IMR-90 (cell line): ENCODE measurements at regions of chr19 and their contacts with region 1.

Region 1: GRCh38 chr19:47608074-47608918 is 638 bp upstream of the BICRA start:
- DNase-seq: peak; percentile 90
- ATAC-seq: peak; percentile 94
- H3K4me3 ChIP-seq: peak overlapping the region; percentile 95
- H3K27ac ChIP-seq: peak overlapping the region; percentile 98
- H3K4me1 ChIP-seq: peaks cover 15% of the 10 kb centered on the region
- H3K27me3 ChIP-seq: no peaks in the 10 kb centered on the region
- CTCF ChIP-seq: peak; percentile 30; the same call in 1 of the 2 replicates
- POLR2A ChIP-seq: peak; percentile 80
- RAD21 ChIP-seq: peak; percentile 26

Region 2: GRCh38 chr19:47540728-47541127 is 67.6 kb before region 1 on chr19:
- CTCF ChIA-PET with region 1: no interaction called
- POLR2A ChIA-PET with region 1: no interaction called
- dilution Hi-C with region 1: no loop called
- in situ Hi-C with region 1: no loop called
- intact Hi-C with region 1: loop called (anchors 2 kb)
- DNase-seq: peak; percentile 51
- ATAC-seq: peak; percentile 84
- H3K4me3 ChIP-seq: no peak overlapping the region
- H3K27ac ChIP-seq: no peak overlapping the region
- H3K4me1 ChIP-seq: peaks cover 3% of the 10 kb centered on the region
- H3K27me3 ChIP-seq: peaks cover 31% of the 10 kb centered on the region
- CTCF ChIP-seq: peak; percentile 44
- POLR2A ChIP-seq: no peak
- RAD21 ChIP-seq: peak; percentile 39

Region 3: GRCh38 chr19:47652285-47652684 is 44.0 kb after region 1 on chr19:
- CTCF ChIA-PET with region 1: no interaction called
- POLR2A ChIA-PET with region 1: no interaction called
- dilution Hi-C with region 1: no loop called
- in situ Hi-C with region 1: no loop called
- intact Hi-C with region 1: no loop called
- DNase-seq: no peak
- ATAC-seq: no peak
- H3K4me3 ChIP-seq: no peak overlapping the region
- H3K27ac ChIP-seq: no peak overlapping the region
- H3K4me1 ChIP-seq: no peaks in the 10 kb centered on the region; the same call in 1 of the 2 replicates
- H3K27me3 ChIP-seq: no peaks in the 10 kb centered on the region
- CTCF ChIP-seq: no peak
- POLR2A ChIP-seq: no peak
- RAD21 ChIP-seq: no peak

Region 4: GRCh38 chr19:47663841-47664771 is 55.8 kb after region 1 on chr19:
- CTCF ChIA-PET with region 1: no interaction called
- POLR2A ChIA-PET with region 1: no interaction called
- dilution Hi-C with region 1: no loop called
- in situ Hi-C with region 1: no loop called
- intact Hi-C with region 1: loop called (anchors 2 kb)
- DNase-seq: peak; percentile 99
- ATAC-seq: peak; percentile 80
- H3K4me3 ChIP-seq: no peak overlapping the region; the same call in 1 of the 2 replicates
- H3K27ac ChIP-seq: peak overlapping the region; percentile 83
- H3K4me1 ChIP-seq: peaks cover 35% of the 10 kb centered on the region
- H3K27me3 ChIP-seq: no peaks in the 10 kb centered on the region
- CTCF ChIP-seq: no peak
- POLR2A ChIP-seq: no peak
- RAD21 ChIP-seq: peak; percentile 17; the same call in 1 of the 2 replicates

Region 5: GRCh38 chr19:47707135-47707925 is 99.0 kb after region 1 on chr19:
- CTCF ChIA-PET with region 1: no interaction called
- POLR2A ChIA-PET with region 1: no interaction called
- dilution Hi-C with region 1: no loop called
- in situ Hi-C with region 1: no loop called
- intact Hi-C with region 1: no loop called
- DNase-seq: peak; percentile 75
- ATAC-seq: peak; percentile 89
- H3K4me3 ChIP-seq: no peak overlapping the region
- H3K27ac ChIP-seq: no peak overlapping the region
- H3K4me1 ChIP-seq: peaks cover 5% of the 10 kb centered on the region
- H3K27me3 ChIP-seq: no peaks in the 10 kb centered on the region
- CTCF ChIP-seq: peak; percentile 88
- POLR2A ChIP-seq: 0 out of 2 replicates have a peak, but pooled peaks have one; percentile 27
- RAD21 ChIP-seq: peak; percentile 89